ENCODE measurements at regions of chr2 and their contacts with region 1.

Region 1: DNA sequence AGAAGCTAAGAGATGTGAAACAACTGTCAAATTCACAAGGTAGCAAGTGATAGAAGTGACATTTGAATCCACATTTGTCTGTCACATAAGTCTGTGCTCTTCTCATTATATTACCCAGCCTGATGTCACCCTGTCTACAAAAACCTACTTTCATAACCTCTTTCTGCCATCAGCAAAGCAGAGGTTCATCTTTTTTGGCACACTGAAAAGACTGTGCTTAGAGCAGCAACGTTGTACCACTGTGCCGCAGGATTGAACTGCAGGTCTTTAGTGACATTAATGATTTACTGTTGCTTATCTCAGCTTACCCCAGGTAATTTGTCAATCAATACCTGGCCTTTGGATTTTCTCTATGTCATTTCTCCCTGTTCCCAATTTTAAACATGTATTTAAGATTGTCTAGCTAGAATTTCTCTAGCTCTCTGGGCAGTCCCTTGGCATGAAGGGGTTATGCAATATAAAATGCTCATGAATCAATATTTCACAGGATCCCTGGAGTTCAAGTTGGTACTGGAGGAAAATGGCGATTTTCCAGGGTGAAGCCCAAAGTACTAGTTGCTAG is 31.4 kb upstream of the TDRD15 start:
- DNase-seq: no peak
- H3K4me3 ChIP-seq: no peak overlapping the region
- H3K27ac ChIP-seq: no peak overlapping the region
- H3K27me3 ChIP-seq: peaks cover 0 to 7% (median 0%) of the 10 kb centered on the region in 45 donors
- CTCF ChIP-seq: no peak

Region 2: GRCh38 chr2:21543630-21544029 is 451.2 kb after region 1 on chr2:
- intact Hi-C with region 1: loop called in 1 of 2 experiments (anchors 5 kb)
- DNase-seq: no peak
- H3K4me3 ChIP-seq: no peak overlapping the region
- H3K27ac ChIP-seq: no peak overlapping the region
- H3K27me3 ChIP-seq: peaks cover 0 to under 1% (median 0%) of the 10 kb centered on the region in 45 donors
- CTCF ChIP-seq: no peak